MCF 10A (cell line): ENCODE measurements at regions of chr6 and their contacts with region 1.

Region 1: GRCh38 chr6:30061092-30061857 is at the start of gene POLR1H:
- DNase-seq: peak; percentile 97
- H3K4me3 Mint-ChIP-seq: peak within 1 kb of the TSS; percentile 96
- H3K27ac Mint-ChIP-seq: peak within 1 kb of the TSS; percentile 92
- H3K4me1 Mint-ChIP-seq: peaks cover 12% of the 10 kb centered on the region
- H3K27me3 Mint-ChIP-seq: no peaks in the 10 kb centered on the region
- CTCF ChIP-seq: no peak
- total RNA-seq, gene POLR1H: 60.9 and 68.3 TPM in 2 replicates

Region 2: DNA sequence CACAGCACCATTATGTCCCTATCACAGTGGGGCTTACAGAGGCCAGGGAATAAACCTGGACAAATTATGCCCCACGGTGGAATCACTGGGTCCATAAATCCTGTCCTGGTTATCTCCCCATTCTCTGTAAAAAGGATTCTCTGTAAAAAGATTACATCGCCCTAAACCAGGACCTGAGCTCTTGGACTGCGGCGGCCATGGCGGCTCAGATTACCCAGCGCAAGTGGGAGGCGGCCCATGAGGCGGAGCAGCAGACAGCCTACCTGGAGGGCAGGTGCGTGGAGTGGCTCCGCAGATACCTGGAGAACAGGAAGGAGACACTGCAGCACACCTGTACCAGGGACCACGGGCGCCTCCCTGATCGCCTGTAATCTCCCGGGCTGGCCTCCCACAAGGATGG is 127.3 kb before region 1 on chr6:
- CTCF ChIA-PET with region 1: no interaction called
- POLR2A ChIA-PET with region 1: no interaction called
- intact Hi-C with region 1: no loop called
- DNase-seq: no peak
- H3K4me3 Mint-ChIP-seq: no peak overlapping the region
- H3K27ac Mint-ChIP-seq: no peak overlapping the region
- H3K4me1 Mint-ChIP-seq: no peaks in the 10 kb centered on the region
- H3K27me3 Mint-ChIP-seq: no peaks in the 10 kb centered on the region
- CTCF ChIP-seq: no peak

Region 3: DNA sequence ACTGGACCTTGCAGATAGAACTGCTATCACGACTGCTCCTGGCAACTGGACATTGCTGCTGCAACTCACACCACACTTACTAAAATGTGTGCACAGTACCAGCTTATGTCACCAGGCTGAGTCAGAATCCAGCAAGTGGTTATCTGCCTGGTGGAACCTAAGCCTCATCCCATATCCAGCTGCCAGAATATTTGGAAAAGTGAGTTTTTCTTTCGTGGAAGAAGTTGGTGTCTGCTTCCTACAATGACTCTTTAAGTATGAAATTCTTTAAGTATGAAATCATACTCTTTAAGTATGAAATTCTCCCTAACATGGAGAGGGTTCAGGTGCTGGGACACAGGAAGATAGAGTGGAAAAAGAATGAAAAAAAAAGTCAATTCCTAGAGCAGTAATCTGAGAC is 16.6 kb before region 1 on chr6:
- CTCF ChIA-PET with region 1: interaction called, 5 read pairs
- POLR2A ChIA-PET with region 1: interaction called, 10 read pairs
- intact Hi-C with region 1: no loop called
- DNase-seq: no peak
- H3K4me3 Mint-ChIP-seq: no peak overlapping the region
- H3K27ac Mint-ChIP-seq: no peak overlapping the region
- H3K4me1 Mint-ChIP-seq: no peaks in the 10 kb centered on the region
- H3K27me3 Mint-ChIP-seq: no peaks in the 10 kb centered on the region
- CTCF ChIP-seq: no peak

Region 4: GRCh38 chr6:30075161-30075986 is 14.1 kb after region 1 on chr6 and contains the start of gene RNF39:
- CTCF ChIA-PET with region 1: interaction called, 12 read pairs
- POLR2A ChIA-PET with region 1: interaction called, 101 read pairs
- intact Hi-C with region 1: no loop called
- DNase-seq: no peak
- H3K4me3 Mint-ChIP-seq: peak within 1 kb of the TSS; percentile 84
- H3K27ac Mint-ChIP-seq: peak within 1 kb of the TSS; percentile 85
- H3K4me1 Mint-ChIP-seq: peaks cover 39% of the 10 kb centered on the region
- H3K27me3 Mint-ChIP-seq: no peaks in the 10 kb centered on the region
- CTCF ChIP-seq: peak; percentile 57
- total RNA-seq, gene RNF39: 2.3 and 3.6 TPM in 2 replicates

Region 5: GRCh38 chr6:30091577-30092381 is 30.5 kb after region 1 on chr6:
- CTCF ChIA-PET with region 1: interaction called, 3 read pairs
- POLR2A ChIA-PET with region 1: interaction called, 16 read pairs
- intact Hi-C with region 1: no loop called
- DNase-seq: peak; percentile 79
- H3K4me3 Mint-ChIP-seq: no peak overlapping the region
- H3K27ac Mint-ChIP-seq: peak overlapping the region; percentile 67
- H3K4me1 Mint-ChIP-seq: peaks cover 25% of the 10 kb centered on the region
- H3K27me3 Mint-ChIP-seq: no peaks in the 10 kb centered on the region
- CTCF ChIP-seq: no peak

Region 6: DNA sequence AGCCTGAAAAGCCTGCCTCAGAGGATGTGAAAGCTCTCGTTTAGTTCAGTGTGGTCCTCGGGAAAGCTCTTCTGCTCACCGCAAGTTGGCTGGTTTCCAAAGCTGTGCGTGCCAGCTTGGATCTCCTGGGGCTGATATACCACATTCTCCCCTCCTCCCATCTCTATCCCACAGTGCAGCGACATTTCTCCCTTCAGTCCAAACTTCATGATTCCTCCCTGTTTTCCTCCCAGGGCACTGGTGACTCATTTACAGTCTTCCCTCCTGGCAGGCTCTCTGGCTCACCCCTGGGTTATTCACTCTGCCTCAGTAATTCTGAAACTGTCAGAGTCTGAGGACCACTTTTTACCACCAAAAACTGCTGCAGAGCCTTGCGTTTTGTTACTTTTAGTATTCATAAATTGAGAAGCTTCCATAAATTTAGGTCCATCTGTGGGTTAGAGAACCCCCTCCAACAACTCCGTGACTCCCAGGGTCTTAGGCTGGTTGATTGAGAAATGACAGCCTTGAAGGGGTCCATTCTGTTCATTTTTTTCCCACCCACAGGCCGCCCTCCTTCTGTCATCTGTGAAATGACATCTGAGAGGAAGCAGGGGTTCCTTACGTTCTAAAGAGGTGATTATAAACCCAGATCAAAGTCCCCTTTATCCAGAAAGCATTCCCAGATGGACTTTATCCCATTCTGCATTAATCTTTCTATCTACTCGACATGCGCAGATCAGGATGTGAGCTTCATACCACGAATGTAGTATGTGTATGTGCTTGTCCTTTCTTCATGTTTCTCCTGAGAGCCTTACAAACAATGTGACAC is 93.6 kb after region 1 on chr6:
- CTCF ChIA-PET with region 1: no interaction called
- POLR2A ChIA-PET with region 1: interaction called, 17 read pairs
- intact Hi-C with region 1: no loop called
- DNase-seq: peak; percentile 93
- H3K4me3 Mint-ChIP-seq: peak overlapping the region; percentile 5
- H3K27ac Mint-ChIP-seq: peak overlapping the region; percentile 44
- H3K4me1 Mint-ChIP-seq: peaks cover 26% of the 10 kb centered on the region
- H3K27me3 Mint-ChIP-seq: no peaks in the 10 kb centered on the region
- CTCF ChIP-seq: no peak